ENCODE measurements at regions of chr5 and their contacts with region 1.

Region 1: GRCh38 chr5:158988987-158989730 is 110.6 kb downstream of the EBF1 start:
- DNase-seq: no peak
- ATAC-seq: no peak
- H3K4me3 Mint-ChIP-seq: no peak overlapping the region
- H3K27ac Mint-ChIP-seq: no peak overlapping the region
- H3K4me1 Mint-ChIP-seq: peaks cover 76% of the 10 kb centered on the region
- H3K27me3 Mint-ChIP-seq: no peaks in the 10 kb centered on the region
- CTCF ChIP-seq: no peak

Region 2: GRCh38 chr5:159003037-159004030 is 14.2 kb after region 1 on chr5:
- CTCF ChIA-PET with region 1: no interaction called
- POLR2A ChIA-PET with region 1: interaction called, 5 read pairs
- intact Hi-C with region 1: loop called (anchors 2 kb)
- DNase-seq: no peak
- ATAC-seq: no peak
- H3K4me3 Mint-ChIP-seq: peak overlapping the region; percentile 12
- H3K27ac Mint-ChIP-seq: peak overlapping the region; percentile 59
- H3K4me1 Mint-ChIP-seq: peaks cover 79% of the 10 kb centered on the region
- H3K27me3 Mint-ChIP-seq: no peaks in the 10 kb centered on the region
- CTCF ChIP-seq: no peak